HEK293T (cell line): ENCODE measurements at regions of chr3 and their contacts with region 1.

Region 1: DNA sequence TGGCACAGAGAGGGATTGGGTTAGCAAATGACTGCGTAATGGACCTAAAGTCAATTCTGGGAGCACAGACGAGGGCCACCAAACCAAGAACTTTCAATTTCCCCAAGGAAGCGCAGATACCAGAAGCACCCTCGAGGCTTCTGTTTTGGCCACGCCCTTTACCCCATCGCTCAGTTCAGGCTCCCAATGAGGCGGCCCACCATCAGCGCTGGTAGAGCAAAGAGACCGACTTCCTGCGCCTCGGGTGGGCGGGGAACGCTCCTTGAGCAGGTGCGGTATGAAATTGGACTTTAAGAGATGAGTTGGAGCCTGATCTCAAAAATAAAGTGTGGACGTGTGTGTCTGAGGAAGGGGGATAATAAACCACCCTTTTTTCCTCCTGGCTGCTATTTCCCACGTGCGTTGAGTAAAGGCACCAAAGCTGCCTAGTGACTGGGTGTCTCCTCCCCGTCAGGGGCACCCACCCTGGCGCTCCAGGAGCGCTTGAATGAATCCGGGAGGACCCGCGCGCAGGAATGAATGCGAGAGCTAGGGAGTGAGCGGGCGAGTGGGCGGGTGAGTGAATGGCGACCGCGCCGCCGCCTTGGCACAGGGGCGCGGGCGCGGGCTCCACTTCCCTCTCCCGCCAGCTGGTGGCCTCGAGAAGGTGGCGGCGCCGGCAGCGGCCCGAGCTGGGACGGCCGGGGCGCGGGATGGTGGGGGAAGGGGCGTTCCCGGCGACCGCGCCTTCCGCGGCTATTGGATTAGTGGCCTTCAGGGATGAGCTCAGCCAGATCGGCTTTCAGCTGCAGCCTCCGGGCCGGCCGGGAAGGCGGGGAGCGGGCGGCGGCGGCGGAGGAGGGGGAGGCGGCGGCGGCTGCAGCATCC is at the start of gene SPSB4:
- DNase-seq: peak; percentile 87

Region 2: GRCh38 chr3:141076797-141077571 is 26.2 kb after region 1 on chr3:
- CTCF ChIA-PET with region 1: interaction called, 3 read pairs
- POLR2A ChIA-PET with region 1: interaction called, 11 read pairs
- DNase-seq: peak; percentile 57